Cardiac septum (tissue), 1 donor: ENCODE measurements at regions of chr7 and their contacts with region 1.

Region 1: GRCh38 chr7:123534383-123535260 is at the start of gene IQUB:
- DNase-seq: peak; percentile 99
- total RNA-seq, gene IQUB: 0.78 TPM

Region 2: GRCh38 chr7:123494193-123494796 is 40.3 kb before region 1 on chr7:
- intact Hi-C with region 1: loop called (anchors 5 kb)
- DNase-seq: no peak